Transverse colon (tissue), 4 donors: ENCODE measurements at regions of chr18 and their contacts with region 1.

Region 1: GRCh38 chr18:7584646-7585275 is 17.6 kb downstream of the PTPRM start:
- DNase-seq: no peak
- H3K4me3 ChIP-seq: no peak overlapping the region
- H3K27ac ChIP-seq: no peak overlapping the region
- H3K4me1 ChIP-seq: peaks cover 0 to 6% (median 0%) of the 10 kb centered on the region in 4 donors
- H3K27me3 ChIP-seq: no peaks in the 10 kb centered on the region
- CTCF ChIP-seq: no peak
- EP300 ChIP-seq: no peak
- POLR2A ChIP-seq: no peak

Region 2: DNA sequence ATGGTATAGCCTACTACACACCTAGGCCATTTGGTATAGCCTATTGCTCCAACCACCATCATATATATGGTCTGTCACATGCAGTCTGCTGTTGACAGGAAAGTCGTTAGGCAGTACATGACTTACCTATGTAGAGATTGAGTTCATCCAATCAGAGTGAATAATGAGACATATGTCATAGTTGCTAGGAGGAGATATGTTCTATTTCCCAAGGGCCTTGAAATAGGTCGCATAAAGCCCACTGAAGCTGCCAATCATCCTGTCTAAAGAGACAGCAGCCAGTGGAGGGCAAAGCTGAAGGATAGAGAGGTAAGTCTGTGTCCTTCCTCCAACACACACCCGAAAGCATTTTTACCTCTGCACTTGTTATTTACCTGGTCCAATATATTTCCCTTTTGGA is 245.7 kb after region 1 on chr18:
- in situ Hi-C with region 1: no loop called
- intact Hi-C with region 1: no loop called
- DNase-seq: no peak
- H3K4me3 ChIP-seq: no peak overlapping the region
- H3K27ac ChIP-seq: no peak overlapping the region
- H3K4me1 ChIP-seq: no peaks in the 10 kb centered on the region
- H3K27me3 ChIP-seq: no peaks in the 10 kb centered on the region
- CTCF ChIP-seq: no peak
- EP300 ChIP-seq: no peak
- POLR2A ChIP-seq: no peak

Region 3: GRCh38 chr18:8948471-8949149 is 1363.8 kb after region 1 on chr18:
- in situ Hi-C with region 1: no loop called
- intact Hi-C with region 1: loop called (anchors 10 kb)
- DNase-seq: no peak
- H3K4me3 ChIP-seq: no peak overlapping the region
- H3K27ac ChIP-seq: peak overlapping the region; percentile 63 to 83 (median 70)
- H3K4me1 ChIP-seq: no peaks in the 10 kb centered on the region
- H3K27me3 ChIP-seq: no peaks in the 10 kb centered on the region
- CTCF ChIP-seq: no peak
- EP300 ChIP-seq: peak; percentile 67
- POLR2A ChIP-seq: no peak